HAP-1 (cell line): ENCODE measurements at regions of chr7 and their contacts with region 1.

Region 1: DNA sequence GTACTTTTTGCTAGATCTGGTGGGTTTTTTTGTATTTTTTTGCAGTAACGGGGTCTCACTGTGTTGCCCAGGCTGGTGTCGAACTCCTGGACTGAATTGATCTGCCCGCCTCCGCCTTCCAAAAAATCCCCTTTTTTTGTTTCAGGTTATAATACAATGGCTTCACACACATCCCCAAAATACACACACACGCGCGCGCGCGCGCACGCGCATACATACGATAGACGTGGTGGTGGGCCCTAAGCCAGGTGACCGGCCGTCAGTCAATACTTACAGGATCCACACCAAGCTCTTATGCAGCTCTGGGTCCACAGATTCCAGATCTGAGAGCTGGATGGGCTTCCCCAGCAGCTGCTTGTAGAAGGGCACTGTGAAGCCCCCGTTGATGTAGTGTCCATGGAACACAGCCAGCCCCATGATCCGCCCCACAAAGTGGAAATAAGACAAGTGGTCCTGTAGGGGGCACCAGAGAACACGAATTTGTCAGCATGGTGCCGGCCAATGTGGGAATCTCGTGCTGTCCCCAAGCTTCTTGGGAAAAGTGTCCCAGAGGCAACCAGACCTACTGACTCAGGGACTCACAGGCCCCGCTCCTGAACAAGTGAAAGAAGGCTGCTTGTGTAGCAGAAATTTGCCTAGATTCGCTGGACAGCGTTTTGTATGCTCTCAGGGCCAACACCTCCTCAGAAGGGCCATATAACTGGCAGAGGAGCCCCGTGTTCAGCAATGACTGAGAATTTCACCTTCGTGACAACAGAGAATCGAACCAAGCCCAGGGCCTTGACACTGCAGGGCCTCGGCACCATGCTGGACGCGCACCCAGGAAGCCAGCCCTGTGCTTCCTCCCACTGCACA is 103.6 kb downstream of the SMURF1 start:
- DNase-seq: peak; percentile 72 to 90
- H3K4me3 ChIP-seq: no peak overlapping the region
- H3K4me1 ChIP-seq: no peaks in the 10 kb centered on the region
- H3K27me3 ChIP-seq: no peaks in the 10 kb centered on the region

Region 2: DNA sequence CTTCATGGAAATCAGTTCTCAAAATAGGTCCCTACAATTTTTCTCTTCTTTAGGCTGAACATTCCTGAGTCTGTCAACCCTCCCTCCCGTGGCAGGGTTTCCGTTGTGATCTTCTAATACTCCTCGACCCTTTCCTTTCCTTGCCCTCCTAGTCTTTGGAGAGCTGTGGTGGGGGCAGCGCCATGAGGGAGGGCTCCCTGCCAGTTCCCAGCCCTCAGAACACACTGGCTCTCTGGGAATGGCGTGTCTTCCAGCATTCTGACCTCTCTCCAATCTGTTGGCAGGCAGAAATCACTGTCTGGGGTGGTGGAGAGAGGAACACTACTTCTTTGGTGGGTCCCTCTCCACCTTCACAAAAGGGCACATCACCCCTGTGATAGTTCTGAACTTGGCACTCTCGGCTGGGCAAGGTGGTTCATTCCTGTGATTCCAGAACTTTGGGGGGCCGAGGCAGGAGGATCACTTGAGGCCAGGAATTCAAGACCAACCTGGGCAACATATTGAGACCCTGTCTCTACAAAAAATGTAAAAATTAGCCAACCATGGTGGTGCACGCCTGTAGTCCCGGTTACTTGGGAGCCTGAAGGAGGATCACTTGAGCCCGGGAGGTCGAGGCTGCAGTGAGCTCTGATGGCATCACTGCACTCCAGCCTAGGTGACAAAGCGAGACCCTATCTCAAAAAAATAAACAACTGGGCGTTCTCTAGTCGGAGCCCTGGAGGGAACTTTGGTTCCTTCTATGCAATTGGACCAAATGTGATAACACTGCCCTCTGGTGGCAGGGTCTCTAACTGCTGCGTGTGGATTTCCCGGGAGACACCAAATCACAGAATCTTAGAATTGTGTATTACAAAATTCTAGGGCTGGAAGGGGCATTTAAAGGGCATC is 272.2 kb after region 1 on chr7:
- in situ Hi-C with region 1: loop called (anchors 5 kb)
- DNase-seq: peak; percentile 48 to 83
- H3K4me3 ChIP-seq: no peak overlapping the region
- H3K4me1 ChIP-seq: no peaks in the 10 kb centered on the region
- H3K27me3 ChIP-seq: no peaks in the 10 kb centered on the region